ENCODE measurements at regions of chr14 and their contacts with region 1.

Region 1: DNA sequence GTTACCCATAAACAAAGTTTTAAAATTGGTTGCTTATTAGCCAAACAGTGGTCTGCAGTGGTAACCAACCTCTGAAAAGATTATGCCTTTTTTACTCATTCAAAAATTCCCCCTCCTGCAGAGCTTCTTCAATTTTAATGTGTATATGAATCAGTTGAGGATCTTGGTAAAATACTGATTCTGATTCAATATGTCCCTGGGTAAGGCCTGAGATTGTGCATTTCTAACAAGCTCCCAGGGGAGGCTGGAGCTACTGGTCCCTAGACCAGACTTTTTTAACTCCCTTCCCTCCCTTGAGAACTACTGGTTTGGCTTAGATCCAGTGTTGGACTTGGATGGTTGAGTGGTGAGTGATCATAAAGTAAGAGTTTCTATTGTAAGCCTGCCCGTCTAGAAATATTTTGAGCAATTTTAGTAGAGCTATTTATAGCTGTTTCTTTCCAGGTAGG is 90.2 kb downstream of the FUT8 start:
- DNase-seq: no peak
- ATAC-seq: no peak
- H3K4me3 ChIP-seq: no peak overlapping the region
- H3K4me3 Mint-ChIP-seq: no peak overlapping the region
- H3K27ac ChIP-seq: no peak overlapping the region
- H3K27ac Mint-ChIP-seq: no peak overlapping the region
- H3K4me1 ChIP-seq: no peaks in the 10 kb centered on the region
- H3K4me1 Mint-ChIP-seq: peaks cover 37 to 46% (median 42%) of the 10 kb centered on the region in 3 donors
- H3K27me3 ChIP-seq: no peaks in the 10 kb centered on the region
- H3K27me3 Mint-ChIP-seq: no peaks in the 10 kb centered on the region

Region 2: GRCh38 chr14:65476273-65476941 is 26.3 kb before region 1 on chr14:
- CTCF ChIA-PET with region 1: no interaction called
- POLR2A ChIA-PET with region 1: interaction called in 1 of 2 experiments, 13 read pairs
- DNase-seq: no peak
- ATAC-seq: no peak
- H3K4me3 ChIP-seq: no peak overlapping the region
- H3K4me3 Mint-ChIP-seq: no peak overlapping the region
- H3K27ac ChIP-seq: no peak overlapping the region
- H3K27ac Mint-ChIP-seq: no peak overlapping the region
- H3K4me1 ChIP-seq: peaks cover 0 to 5% of the 10 kb centered on the region in 2 experiments
- H3K4me1 Mint-ChIP-seq: peaks cover 60 to 72% (median 69%) of the 10 kb centered on the region in 3 donors
- H3K27me3 ChIP-seq: no peaks in the 10 kb centered on the region
- H3K27me3 Mint-ChIP-seq: no peaks in the 10 kb centered on the region

Region 3: DNA sequence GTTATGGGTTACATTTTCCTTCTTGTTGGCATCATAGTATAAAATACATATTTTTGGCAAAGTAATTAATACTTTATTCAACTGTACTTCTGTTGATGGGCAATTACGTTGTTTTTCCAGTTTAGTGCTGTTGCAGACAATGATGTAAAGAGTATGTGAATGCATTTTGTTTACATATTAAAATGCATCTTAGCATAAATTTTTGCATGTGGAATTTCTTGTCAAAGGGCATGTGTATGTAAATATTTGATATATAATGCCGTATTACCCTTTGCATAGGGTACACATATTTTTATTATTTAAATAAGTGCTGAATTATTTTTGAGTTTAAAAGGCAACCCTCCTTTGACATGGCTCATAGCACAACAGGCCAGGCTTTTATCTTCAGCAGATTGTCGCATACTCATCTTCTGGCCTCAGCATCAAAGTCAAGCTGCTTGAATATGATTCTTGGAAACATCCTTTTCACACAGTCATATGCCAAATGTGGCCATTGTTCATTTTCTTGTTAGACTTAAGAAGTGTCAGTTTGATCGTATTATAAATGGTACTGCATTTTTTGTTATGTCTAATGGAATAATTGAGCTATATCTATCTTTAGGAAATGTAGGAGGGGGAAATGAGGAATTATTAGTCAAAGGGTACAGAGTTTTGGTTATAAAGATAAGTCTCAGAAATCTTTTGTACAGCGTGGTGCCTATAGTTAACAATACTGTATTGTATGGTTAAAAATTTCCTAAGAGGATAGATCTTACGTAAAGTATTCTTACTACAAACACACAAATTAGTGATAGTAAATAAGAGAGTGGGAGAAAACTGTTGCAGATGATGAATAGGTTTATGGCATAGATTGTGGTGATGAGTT is 48.3 kb after region 1 on chr14:
- CTCF ChIA-PET with region 1: no interaction called
- POLR2A ChIA-PET with region 1: interaction called in 1 of 2 experiments, 12 read pairs
- DNase-seq: no peak
- ATAC-seq: no peak
- H3K4me3 ChIP-seq: no peak overlapping the region
- H3K4me3 Mint-ChIP-seq: no peak overlapping the region
- H3K27ac ChIP-seq: no peak overlapping the region
- H3K27ac Mint-ChIP-seq: no peak overlapping the region
- H3K4me1 ChIP-seq: no peaks in the 10 kb centered on the region
- H3K4me1 Mint-ChIP-seq: peaks cover 14 to 29% (median 27%) of the 10 kb centered on the region in 3 donors
- H3K27me3 ChIP-seq: no peaks in the 10 kb centered on the region
- H3K27me3 Mint-ChIP-seq: no peaks in the 10 kb centered on the region

Measured in T-cell (primary cell).